IMR-90 (cell line): ENCODE measurements at regions of chr11 and their contacts with region 1.

Region 1: DNA sequence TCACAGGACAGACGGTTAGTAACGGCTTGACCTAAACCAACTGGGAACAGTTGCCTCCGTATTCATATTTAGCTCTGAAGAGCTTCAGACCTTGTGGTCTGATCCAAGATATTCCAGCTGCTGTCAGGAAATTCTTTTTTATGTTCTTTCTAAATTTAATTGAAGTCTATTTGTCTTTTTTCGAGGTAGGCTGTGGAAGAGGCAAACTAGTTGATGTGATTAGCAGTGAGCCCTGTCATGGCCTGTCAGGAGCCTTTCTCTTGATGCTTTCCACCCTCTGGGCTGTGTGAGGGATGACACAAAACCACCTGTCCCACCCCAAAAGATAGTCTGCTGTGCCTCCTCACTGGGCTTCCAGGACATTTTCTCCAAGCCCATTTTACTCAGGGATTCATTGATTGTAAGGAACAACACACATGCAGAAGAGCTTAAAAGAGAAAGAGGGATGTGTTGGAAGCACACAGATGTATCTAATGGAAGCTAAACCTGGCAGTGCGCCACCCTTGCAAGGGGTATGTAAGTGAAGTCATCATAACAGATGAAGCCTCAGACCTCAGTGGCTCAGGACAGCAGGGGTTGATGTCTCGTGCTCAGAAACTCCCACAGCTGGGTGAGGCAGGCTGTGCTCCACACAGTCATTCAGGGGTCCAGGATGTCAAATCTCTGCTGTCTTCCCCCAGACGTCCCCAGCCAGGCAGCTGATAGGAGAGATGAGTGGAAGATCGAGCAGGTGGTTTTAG is 170.0 kb downstream of the NCAM1 start:
- DNase-seq: no peak
- ATAC-seq: no peak
- H3K4me3 ChIP-seq: no peak overlapping the region
- H3K27ac ChIP-seq: no peak overlapping the region
- H3K4me1 ChIP-seq: no peaks in the 10 kb centered on the region
- H3K27me3 ChIP-seq: no peaks in the 10 kb centered on the region
- CTCF ChIP-seq: no peak
- POLR2A ChIP-seq: no peak
- RAD21 ChIP-seq: no peak

Region 2: DNA sequence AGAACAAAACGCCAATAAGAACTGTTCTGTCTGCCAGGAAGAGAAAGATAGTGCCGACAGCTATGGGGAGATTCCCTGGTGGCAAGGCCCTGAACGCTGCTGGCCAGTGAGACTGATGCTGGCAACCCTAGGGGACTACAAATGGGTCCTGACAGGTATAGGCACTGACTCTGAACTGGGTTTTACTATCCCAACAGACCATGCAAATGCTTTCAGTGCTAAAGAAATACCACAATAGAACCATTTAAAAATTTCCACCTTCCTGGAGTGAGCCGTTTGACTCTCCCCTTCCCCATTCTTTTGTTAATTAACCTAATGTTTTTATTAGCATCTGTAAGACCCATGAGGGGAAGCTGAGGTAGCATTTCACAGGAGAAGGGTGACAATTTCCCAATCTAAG is 718.5 kb after region 1 on chr11:
- CTCF ChIA-PET with region 1: no interaction called
- POLR2A ChIA-PET with region 1: no interaction called
- dilution Hi-C with region 1: no loop called
- in situ Hi-C with region 1: no loop called
- intact Hi-C with region 1: loop called (anchors 5 kb)
- DNase-seq: no peak
- ATAC-seq: no peak
- H3K4me3 ChIP-seq: no peak overlapping the region
- H3K27ac ChIP-seq: no peak overlapping the region
- H3K4me1 ChIP-seq: no peaks in the 10 kb centered on the region
- H3K27me3 ChIP-seq: no peaks in the 10 kb centered on the region
- CTCF ChIP-seq: no peak
- POLR2A ChIP-seq: no peak
- RAD21 ChIP-seq: no peak